HAP-1 (cell line): ENCODE measurements at regions of chr1 and their contacts with region 1.

Region 1: DNA sequence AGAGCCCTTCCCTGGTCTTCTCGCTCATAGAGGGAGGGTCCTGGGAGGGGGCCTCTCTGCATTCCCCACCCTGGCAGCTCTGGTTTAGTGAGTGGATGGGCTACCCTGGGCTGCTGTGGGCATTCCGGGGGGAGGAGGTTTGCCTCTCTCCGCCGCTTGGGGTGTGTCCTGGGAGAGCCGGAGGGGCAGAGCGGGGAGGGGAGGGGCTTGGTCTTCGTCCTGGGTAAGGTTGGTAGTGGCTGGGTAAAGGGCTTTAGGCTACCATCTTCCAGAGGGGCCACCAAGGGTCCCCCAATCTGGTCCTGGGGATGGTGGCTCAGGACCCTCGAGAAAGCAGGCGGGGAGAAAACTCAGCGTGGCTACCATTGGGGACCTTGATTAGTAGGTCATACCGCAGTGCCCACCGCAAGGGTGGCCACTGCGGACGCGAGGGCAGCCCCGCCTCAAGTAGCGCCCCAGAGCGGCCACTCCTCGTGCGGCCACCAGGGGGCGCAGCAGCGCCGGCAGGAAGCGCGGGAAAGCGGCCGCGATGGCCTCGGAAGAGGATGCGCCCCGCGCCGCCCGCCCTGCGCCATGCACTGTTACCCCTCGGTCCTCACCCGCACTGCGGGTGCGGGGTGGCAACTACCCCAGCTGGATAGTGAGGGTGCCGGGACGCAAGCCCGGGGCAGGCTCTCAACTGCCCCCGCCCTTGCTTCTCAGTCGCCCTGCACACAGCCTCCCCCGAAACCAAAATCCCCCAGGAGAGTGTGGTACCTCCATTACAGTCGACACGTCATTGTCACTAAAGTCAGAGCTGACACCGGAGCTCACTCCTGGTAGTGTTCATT is 44.1 kb upstream of the SLC25A33 start:
- DNase-seq: peak; percentile 55 to 80
- H3K4me3 ChIP-seq: peak overlapping the region; percentile 18
- H3K4me1 ChIP-seq: peaks cover 8% of the 10 kb centered on the region
- H3K27me3 ChIP-seq: no peaks in the 10 kb centered on the region

Region 2: GRCh38 chr1:9573723-9574122 is 78.6 kb after region 1 on chr1:
- in situ Hi-C with region 1: loop called (anchors 5 kb)
- DNase-seq: no peak
- H3K4me3 ChIP-seq: no peak overlapping the region
- H3K4me1 ChIP-seq: no peaks in the 10 kb centered on the region
- H3K27me3 ChIP-seq: no peaks in the 10 kb centered on the region

Region 3: GRCh38 chr1:9676815-9677393 is 181.8 kb after region 1 on chr1:
- in situ Hi-C with region 1: no loop called
- DNase-seq: no peak
- H3K4me3 ChIP-seq: no peak overlapping the region
- H3K4me1 ChIP-seq: no peaks in the 10 kb centered on the region
- H3K27me3 ChIP-seq: no peaks in the 10 kb centered on the region